GM10248 (cell line): ENCODE measurements at regions of chr3 and their contacts with region 1.

Region 1: GRCh38 chr3:137692803-137693431 is 71.2 kb upstream of the SOX14 start:
- DNase-seq: peak; percentile 26
- CTCF ChIP-seq: peak; percentile 43

Region 2: GRCh38 chr3:137105277-137105977 is 587.5 kb before region 1 on chr3:
- CTCF ChIA-PET with region 1: interaction called, 31 read pairs
- POLR2A ChIA-PET with region 1: no interaction called
- DNase-seq: peak; percentile 47
- CTCF ChIP-seq: peak; percentile 71

Region 3: GRCh38 chr3:137110484-137110883 is 582.4 kb before region 1 on chr3:
- CTCF ChIA-PET with region 1: interaction called, 31 read pairs
- POLR2A ChIA-PET with region 1: no interaction called
- DNase-seq: peak; percentile 46
- CTCF ChIP-seq: peak; percentile 49

Region 4: GRCh38 chr3:137121704-137122314 is 571.1 kb before region 1 on chr3:
- CTCF ChIA-PET with region 1: interaction called, 22 read pairs
- POLR2A ChIA-PET with region 1: no interaction called
- DNase-seq: peak; percentile 55
- CTCF ChIP-seq: peak; percentile 74

Region 5: GRCh38 chr3:137468446-137468845 is 224.5 kb before region 1 on chr3:
- CTCF ChIA-PET with region 1: no interaction called
- POLR2A ChIA-PET with region 1: no interaction called
- DNase-seq: no peak
- CTCF ChIP-seq: no peak

Region 6: GRCh38 chr3:137509355-137510045 is 183.4 kb before region 1 on chr3:
- CTCF ChIA-PET with region 1: no interaction called
- POLR2A ChIA-PET with region 1: no interaction called
- DNase-seq: no peak
- CTCF ChIP-seq: no peak

Region 7: DNA sequence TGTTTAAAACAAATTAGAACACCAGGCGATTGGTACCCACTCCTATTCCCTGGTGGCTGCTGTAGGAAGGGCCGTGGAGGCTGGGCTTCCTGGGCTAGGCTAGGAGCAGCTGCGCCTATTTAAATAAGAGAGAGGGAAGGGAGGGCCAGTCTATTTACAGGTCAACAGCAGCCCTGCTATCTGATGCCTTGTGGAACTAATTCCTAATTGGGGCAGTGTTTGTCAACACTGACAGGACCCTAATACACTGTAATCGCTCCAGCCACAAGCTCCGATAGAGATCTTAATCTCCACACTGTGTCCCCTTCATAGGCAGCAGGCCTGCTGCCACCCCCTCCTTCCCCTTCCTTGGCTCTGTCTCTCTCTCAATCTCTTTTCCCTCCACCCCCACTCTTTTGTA is 45.7 kb before region 1 on chr3:
- CTCF ChIA-PET with region 1: no interaction called
- POLR2A ChIA-PET with region 1: no interaction called
- DNase-seq: no peak
- CTCF ChIP-seq: no peak

Region 8: DNA sequence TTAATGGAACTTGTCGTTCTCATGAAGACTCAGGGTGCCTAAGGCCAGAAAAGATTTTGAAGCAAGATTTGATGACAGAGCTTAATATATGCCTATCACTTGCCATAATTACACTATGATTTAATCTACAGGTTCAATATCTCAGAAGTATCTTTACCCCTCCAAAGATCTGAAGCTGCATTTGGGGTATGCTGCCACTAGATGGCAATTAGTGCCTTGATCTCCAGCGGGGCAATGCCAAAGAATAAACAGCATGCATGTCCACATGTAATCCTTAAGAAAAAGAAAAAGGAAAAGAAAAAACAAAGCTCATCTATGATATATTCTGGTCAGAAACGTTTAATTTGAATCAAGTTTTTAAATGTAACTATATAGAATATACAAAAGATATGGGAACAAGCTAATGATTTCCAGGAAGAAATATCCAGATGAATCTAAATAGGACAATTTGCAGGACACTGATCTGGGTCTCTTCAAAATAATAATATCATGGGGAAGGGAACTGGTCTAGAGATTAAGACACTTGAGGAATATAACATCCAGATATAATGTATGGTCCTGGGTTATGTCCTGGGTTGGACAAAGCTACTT is 16.2 kb after region 1 on chr3:
- CTCF ChIA-PET with region 1: interaction called, 18 read pairs
- POLR2A ChIA-PET with region 1: no interaction called
- DNase-seq: peak; percentile 20
- CTCF ChIP-seq: peak; percentile 38